Common myeloid progenitor, CD34-positive (primary cell): ENCODE measurements at regions of chr2 and their contacts with region 1.

Region 1: DNA sequence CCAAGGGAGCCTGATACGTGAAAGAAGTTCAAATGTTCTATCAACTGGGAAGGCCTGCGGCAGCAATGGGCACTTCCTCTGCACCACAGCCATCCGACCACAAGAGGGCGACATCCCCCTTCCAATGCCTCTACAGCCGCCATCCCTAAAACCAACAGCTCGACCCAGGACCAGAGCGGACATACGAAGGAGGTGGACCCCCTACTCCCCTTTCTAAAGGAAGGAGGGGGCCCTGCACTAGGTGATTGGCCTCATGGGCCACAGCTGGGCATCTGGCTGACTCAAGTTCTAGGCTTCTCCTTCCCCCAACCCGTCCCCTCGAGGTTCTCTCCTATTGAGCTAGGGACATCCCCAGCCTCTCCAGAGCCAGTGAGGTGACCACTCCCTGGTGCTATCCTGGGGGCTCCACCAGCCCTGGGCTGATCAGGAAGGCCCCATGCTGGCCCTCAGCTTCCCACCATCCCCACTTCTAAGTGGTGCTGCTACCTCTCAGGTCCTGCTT is 217.2 kb downstream of the TNS1 start:
- DNase-seq: peak; percentile 62 to 77 (median 67)
- H3K4me3 ChIP-seq: peak overlapping the region in 1 of 7 experiments; percentile 48
- H3K27ac ChIP-seq: no peak overlapping the region
- H3K4me1 ChIP-seq: peaks cover 0 to 20% (median 10%) of the 10 kb centered on the region in 4 experiments
- H3K27me3 ChIP-seq: no peaks in the 10 kb centered on the region

Region 2: GRCh38 chr2:217858519-217859491 is 73.2 kb after region 1 on chr2:
- CTCF ChIA-PET with region 1: interaction called, 15 read pairs
- POLR2A ChIA-PET with region 1: no interaction called
- DNase-seq: peak in 2 of 3 donors; percentile 7
- H3K4me3 ChIP-seq: no peak overlapping the region
- H3K27ac ChIP-seq: no peak overlapping the region
- H3K4me1 ChIP-seq: no peaks in the 10 kb centered on the region
- H3K27me3 ChIP-seq: no peaks in the 10 kb centered on the region

Region 3: DNA sequence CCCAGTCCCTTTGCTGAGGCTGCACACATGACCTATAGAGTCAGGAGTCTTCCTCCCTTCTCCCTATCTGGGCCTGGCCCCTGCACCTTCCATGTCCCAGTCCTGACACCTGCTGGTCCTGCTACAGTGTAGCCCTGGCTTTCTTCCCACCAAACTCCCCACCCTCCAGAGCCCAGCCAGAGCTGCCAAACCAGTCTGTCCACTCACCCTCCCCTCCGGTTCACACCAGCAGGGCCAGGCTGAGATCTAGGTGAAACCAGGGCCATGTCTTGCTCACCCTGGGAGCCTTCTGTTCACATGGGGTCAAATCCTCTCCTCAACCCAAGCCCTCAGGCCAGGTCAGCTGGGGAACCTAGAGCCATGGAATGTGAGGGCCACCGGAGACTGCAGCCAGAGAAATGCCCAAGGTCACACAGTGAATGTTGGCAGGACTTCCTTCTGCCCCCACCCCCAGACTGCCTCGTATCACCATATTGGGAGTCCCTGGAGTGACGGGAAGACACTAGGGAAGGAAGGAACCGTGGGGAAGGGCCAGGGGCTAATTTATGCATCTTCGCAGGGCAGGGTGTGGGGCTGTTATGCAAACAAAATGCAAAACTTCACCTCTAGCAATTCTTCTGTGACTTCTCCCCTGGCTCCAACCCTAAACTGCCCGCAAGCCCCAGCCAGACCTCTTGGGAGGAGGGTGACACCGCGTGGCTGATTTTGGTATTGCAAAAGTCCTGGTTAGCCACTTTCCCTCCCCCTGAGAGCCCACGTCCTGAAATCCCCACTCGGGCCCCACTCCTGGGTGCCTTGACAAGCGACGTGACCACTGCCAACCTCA is 202.6 kb after region 1 on chr2:
- CTCF ChIA-PET with region 1: interaction called, 249 read pairs
- POLR2A ChIA-PET with region 1: no interaction called
- DNase-seq: peak; percentile 59 to 82 (median 72)
- H3K4me3 ChIP-seq: no peak overlapping the region
- H3K27ac ChIP-seq: no peak overlapping the region
- H3K4me1 ChIP-seq: no peaks in the 10 kb centered on the region
- H3K27me3 ChIP-seq: no peaks in the 10 kb centered on the region

Region 4: DNA sequence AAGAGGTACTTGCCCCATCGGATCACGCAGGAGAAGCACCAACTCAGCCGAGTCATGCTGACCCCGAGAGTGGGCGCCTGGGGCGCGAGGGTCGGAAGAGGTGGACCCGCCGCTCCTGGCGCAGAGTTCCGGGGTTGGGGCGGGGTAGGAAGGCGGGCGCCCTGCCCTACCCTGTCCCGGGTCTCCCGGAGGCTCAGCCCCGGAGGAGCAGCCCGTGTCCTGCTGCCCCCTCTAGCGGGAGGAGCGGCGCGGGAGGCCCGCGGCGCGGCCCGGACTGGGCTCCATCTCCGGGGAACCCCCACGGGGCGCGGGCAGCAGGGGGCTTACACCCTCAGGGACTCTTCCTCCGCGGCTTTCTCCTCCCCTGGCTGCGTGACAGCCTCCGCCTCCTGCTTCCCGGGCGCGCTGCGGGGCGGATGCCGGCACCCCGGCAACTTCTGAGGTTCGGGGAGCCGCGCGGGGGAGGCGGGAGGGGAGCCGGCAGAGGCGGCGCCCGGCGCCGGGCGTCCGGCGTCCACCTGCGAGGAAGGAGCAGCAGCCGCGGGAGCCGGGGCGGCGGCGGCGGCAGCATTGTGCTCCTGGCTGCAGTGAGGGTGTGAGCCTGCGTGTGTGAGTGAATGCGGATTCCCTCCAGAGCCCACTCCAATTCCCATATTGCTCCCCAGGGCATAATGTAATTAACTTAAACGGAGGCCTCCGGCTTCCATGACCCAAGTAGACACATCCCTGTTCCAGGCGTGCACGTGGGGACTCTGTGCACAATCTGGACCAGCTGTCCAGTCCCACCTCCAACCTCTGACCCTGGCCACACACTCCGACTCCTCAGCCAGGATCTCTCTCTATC is 224.8 kb after region 1 on chr2:
- CTCF ChIA-PET with region 1: interaction called, 10 read pairs
- POLR2A ChIA-PET with region 1: no interaction called
- DNase-seq: peak; percentile 54 to 70 (median 61)
- H3K4me3 ChIP-seq: peak overlapping the region; percentile 44 to 89 (median 73)
- H3K27ac ChIP-seq: no peak overlapping the region
- H3K4me1 ChIP-seq: peaks cover 4 to 40% (median 35%) of the 10 kb centered on the region in 4 experiments
- H3K27me3 ChIP-seq: no peaks in the 10 kb centered on the region

Region 5: GRCh38 chr2:218033590-218034496 is 248.2 kb after region 1 on chr2:
- CTCF ChIA-PET with region 1: interaction called, 11 read pairs
- POLR2A ChIA-PET with region 1: no interaction called
- DNase-seq: peak in 2 of 3 donors; percentile 35 to 46
- H3K4me3 ChIP-seq: peak overlapping the region in 5 of 7 experiments; percentile 42 to 72 (median 59)
- H3K27ac ChIP-seq: no peak overlapping the region
- H3K4me1 ChIP-seq: peaks cover 0 to 15% (median 13%) of the 10 kb centered on the region in 4 experiments
- H3K27me3 ChIP-seq: peaks cover 0 to 1% (median 0%) of the 10 kb centered on the region in 5 experiments

Region 6: GRCh38 chr2:218074031-218074430 is 288.4 kb after region 1 on chr2:
- CTCF ChIA-PET with region 1: interaction called, 77 read pairs
- POLR2A ChIA-PET with region 1: no interaction called
- DNase-seq: peak; percentile 36 to 66 (median 62)
- H3K4me3 ChIP-seq: no peak overlapping the region
- H3K27ac ChIP-seq: no peak overlapping the region
- H3K4me1 ChIP-seq: peaks cover 0 to 2% (median under 1%) of the 10 kb centered on the region in 4 experiments
- H3K27me3 ChIP-seq: peaks cover 0 to 3% (median 0%) of the 10 kb centered on the region in 5 experiments